Mammary epithelial cell (primary cell): ENCODE measurements at regions of chr16 and their contacts with region 1.

Region 1: DNA sequence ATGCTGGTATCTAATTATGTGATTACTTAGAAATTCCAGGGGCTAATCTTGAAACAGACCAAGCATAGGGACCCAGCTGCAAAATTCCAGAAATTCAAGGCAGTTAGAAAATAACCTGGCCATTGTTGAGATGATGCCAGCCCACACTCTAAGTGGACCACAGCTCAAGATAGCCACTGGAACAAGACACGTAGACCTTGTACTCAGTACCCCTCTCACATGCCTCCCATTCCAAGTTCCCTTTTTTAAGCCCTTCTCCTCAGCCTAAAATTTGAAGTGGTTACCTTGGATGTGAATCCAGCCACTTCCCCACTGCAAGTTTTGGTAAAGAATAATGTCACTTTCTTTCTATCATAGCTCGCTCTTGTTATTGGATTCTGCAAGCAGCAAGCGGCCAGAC is 4.1 kb upstream of the ZNF19 start:
- DNase-seq: no peak
- H3K4me3 ChIP-seq: no peak overlapping the region
- H3K27ac ChIP-seq: no peak overlapping the region
- H3K4me1 ChIP-seq: no peaks in the 10 kb centered on the region
- H3K27me3 ChIP-seq: no peaks in the 10 kb centered on the region
- CTCF ChIP-seq: no peak

Region 2: GRCh38 chr16:71555230-71555891 is 62.1 kb after region 1 on chr16:
- CTCF ChIA-PET with region 1: no interaction called
- dilution Hi-C with region 1: loop called (anchors 5 kb)
- in situ Hi-C with region 1: no loop called
- intact Hi-C with region 1: no loop called
- DNase-seq: peak; percentile 48
- H3K4me3 ChIP-seq: no peak overlapping the region
- H3K27ac ChIP-seq: no peak overlapping the region
- H3K4me1 ChIP-seq: no peaks in the 10 kb centered on the region
- H3K27me3 ChIP-seq: peaks cover 4% of the 10 kb centered on the region
- CTCF ChIP-seq: no peak

Region 3: DNA sequence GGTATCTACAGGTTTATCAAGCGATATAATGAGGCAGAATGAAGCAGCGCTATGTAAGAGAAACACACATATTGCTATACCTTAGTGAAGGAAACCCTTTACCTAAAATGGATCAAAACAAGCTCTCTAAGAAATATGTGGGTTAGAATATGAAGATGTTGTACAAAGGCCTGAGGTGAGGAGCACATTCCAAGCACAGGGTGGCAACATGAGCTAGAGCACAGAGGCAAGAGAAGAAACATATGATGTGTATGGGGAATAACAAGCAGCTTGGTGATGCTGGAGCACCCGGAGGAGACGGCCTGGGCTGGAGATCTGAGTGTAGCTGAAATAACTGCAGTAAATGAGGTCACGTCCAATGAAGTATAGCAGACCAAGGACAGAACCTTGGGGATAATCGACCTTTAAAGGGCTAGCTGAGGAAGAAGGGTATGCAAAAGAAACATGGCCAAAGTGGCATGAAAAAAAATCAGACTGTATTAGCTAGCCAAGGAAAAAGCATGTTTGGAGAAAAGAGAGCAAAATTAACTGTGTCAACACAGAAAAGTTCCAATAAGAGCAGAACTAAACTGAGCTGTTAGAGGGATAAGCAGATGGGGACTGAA is 176.8 kb after region 1 on chr16:
- CTCF ChIA-PET with region 1: no interaction called
- dilution Hi-C with region 1: no loop called
- in situ Hi-C with region 1: no loop called
- intact Hi-C with region 1: no loop called
- DNase-seq: no peak
- H3K4me3 ChIP-seq: no peak overlapping the region
- H3K27ac ChIP-seq: no peak overlapping the region
- H3K4me1 ChIP-seq: no peaks in the 10 kb centered on the region
- H3K27me3 ChIP-seq: no peaks in the 10 kb centered on the region
- CTCF ChIP-seq: peak in 1 of 2 donors; percentile 9